Heart right ventricle (tissue), 16 donors: ENCODE measurements at regions of chr1 and their contacts with region 1.

Region 1: GRCh38 chr1:150548632-150549495 is at the start of gene ADAMTSL4:
- DNase-seq: peak in 1 of 2 donors; percentile 65
- ATAC-seq: peak; percentile 20 to 63 (median 40)
- H3K4me3 ChIP-seq: peak within 1 kb of the TSS; percentile 47 to 69 (median 66)
- H3K27ac ChIP-seq: peak within 1 kb of the TSS; percentile 68 to 94 (median 88)
- H3K4me1 ChIP-seq: peaks cover 14 to 57% (median 38%) of the 10 kb centered on the region in 9 donors
- H3K27me3 ChIP-seq: no peaks in the 10 kb centered on the region
- CTCF ChIP-seq: peak in 4 of 9 donors; percentile 24 to 49 (median 40)
- total RNA-seq, gene ADAMTSL4: 22.2 to 86.5 (median 40.7) TPM

Region 2: GRCh38 chr1:150281837-150282653 is 266.8 kb before region 1 on chr1 and contains the start of gene CIART:
- intact Hi-C with region 1: loop called in 1 of 10 experiments (anchors 10 kb)
- DNase-seq: peak; percentile 85 to 96
- ATAC-seq: peak; percentile 94 to 97 (median 96)
- H3K4me3 ChIP-seq: peak within 1 kb of the TSS; percentile 35 to 76 (median 59)
- H3K27ac ChIP-seq: peak within 1 kb of the TSS; percentile 83 to 93 (median 91)
- H3K4me1 ChIP-seq: peaks cover 0 to 32% (median 24%) of the 10 kb centered on the region in 9 donors
- H3K27me3 ChIP-seq: peaks cover 0 to 11% (median 0%) of the 10 kb centered on the region in 7 donors
- CTCF ChIP-seq: no peak
- total RNA-seq, gene CIART: 3.4 to 22.6 (median 15.5) TPM

Region 3: DNA sequence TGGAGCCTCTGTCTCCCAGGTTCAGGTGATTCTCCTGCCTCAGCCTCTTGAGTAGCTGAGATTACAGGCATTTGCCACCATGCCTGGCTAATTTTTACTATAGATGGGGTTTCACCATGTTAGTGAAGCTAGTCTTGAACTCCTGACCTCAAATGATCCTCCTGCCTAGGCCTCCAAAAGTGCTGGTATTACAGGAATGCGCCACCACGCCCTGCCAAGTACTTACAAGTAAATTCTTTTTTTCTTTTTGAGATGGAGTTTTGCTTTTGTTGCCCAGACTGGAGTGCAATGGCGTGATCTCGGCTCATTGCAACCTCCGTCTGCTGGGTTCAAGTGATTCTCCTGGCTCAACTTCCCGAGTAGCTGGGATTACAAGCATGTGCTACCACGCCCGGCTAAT is 142.4 kb before region 1 on chr1:
- intact Hi-C with region 1: no loop called
- DNase-seq: no peak
- ATAC-seq: no peak
- H3K4me3 ChIP-seq: no peak overlapping the region
- H3K27ac ChIP-seq: no peak overlapping the region
- H3K4me1 ChIP-seq: peaks cover 2 to 38% (median 16%) of the 10 kb centered on the region in 9 donors
- H3K27me3 ChIP-seq: no peaks in the 10 kb centered on the region
- CTCF ChIP-seq: no peak

Region 4: GRCh38 chr1:150808121-150808520 is 259.3 kb after region 1 on chr1 and contains the start of gene CTSK:
- intact Hi-C with region 1: loop called in 3 of 10 experiments (anchors 10 kb)
- DNase-seq: peak in 1 of 2 donors; percentile 20
- ATAC-seq: peak in 6 of 8 donors; percentile 44 to 71 (median 54)
- H3K4me3 ChIP-seq: peak within 1 kb of the TSS in 9 of 10 donors; percentile 2 to 48 (median 31)
- H3K27ac ChIP-seq: peak within 1 kb of the TSS in 4 of 10 donors; percentile 9 to 43 (median 32)
- H3K4me1 ChIP-seq: peaks cover 0 to 22% (median 0%) of the 10 kb centered on the region in 9 donors
- H3K27me3 ChIP-seq: no peaks in the 10 kb centered on the region
- CTCF ChIP-seq: no peak
- total RNA-seq, gene CTSK: 2.1 to 10.1 (median 6.6) TPM

Region 5: DNA sequence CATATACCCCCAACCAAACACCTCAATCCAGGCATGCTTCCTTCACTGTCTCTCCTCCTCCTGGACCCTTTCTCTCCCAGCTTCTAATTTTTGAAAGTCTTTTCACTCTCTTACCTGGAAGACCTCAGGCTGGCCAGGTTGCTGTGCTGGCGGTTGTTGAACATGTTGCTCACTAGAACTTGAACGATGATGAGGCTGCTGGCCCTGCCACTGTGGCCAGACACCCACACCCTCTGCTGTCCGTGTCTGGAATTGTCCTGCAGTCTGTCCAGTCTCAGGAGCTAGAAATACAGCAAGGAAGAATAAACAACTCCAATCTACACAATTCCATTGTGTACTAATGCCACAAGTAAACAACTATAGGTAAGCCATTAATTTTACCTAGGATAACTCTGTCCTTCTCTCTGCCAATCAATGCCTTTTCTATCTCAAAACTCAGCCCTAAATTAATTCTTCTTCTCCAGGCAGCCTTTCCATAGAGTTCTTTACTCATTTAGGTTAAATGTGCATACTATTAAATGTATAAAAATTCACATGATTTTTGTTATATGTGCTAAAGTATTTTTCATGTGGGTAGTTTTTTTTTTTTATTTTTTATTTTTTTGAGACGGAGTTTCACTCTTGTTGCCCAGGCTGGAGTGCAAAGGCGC is 264.3 kb after region 1 on chr1:
- intact Hi-C with region 1: loop called in 3 of 10 experiments (anchors 10 kb)
- DNase-seq: peak; percentile 45
- ATAC-seq: peak in 6 of 8 donors; percentile 65 to 85 (median 72)
- H3K4me3 ChIP-seq: no peak overlapping the region
- H3K27ac ChIP-seq: no peak overlapping the region
- H3K4me1 ChIP-seq: peaks cover 0 to 11% (median 0%) of the 10 kb centered on the region in 9 donors
- H3K27me3 ChIP-seq: no peaks in the 10 kb centered on the region
- CTCF ChIP-seq: peak; percentile 25 to 74 (median 58)